CD4-positive, alpha-beta T cell (primary cell): ENCODE measurements at regions of chrX and their contacts with region 1.

Region 1: GRCh38 chrX:140141444-140142029 is 176.2 kb upstream of the CXorf66 start:
- DNase-seq: peak in 7 of 14 experiments; percentile 1 to 44 (median 15)
- ATAC-seq: no peak
- H3K4me3 ChIP-seq: no peak overlapping the region
- H3K4me3 Mint-ChIP-seq: no peak overlapping the region
- H3K27ac ChIP-seq: no peak overlapping the region
- H3K27ac Mint-ChIP-seq: no peak overlapping the region
- H3K4me1 ChIP-seq: no peaks in the 10 kb centered on the region
- H3K4me1 Mint-ChIP-seq: no peaks in the 10 kb centered on the region
- H3K27me3 ChIP-seq: no peaks in the 10 kb centered on the region
- H3K27me3 Mint-ChIP-seq: no peaks in the 10 kb centered on the region
- CTCF ChIP-seq: peak; percentile 43

Region 2: DNA sequence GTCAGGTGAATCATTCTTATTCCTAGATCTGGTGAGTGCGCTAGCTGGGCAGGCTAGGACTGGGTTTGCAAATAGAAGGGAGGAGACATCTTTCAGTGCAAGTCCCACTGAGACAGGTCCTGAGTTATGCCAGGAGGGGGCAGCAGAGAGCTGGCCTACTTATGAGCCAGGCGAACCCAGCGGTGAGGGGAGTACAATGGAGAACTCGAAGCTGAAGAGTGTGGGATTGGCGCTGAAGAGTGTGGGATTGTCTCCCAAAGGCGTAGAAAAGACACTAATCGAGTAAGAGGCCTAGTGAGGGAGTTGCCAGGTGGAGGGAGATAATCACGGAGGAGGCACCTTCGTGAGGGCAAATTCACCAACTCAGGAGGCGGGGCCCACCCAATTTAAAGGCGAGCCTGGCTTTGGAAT is 84.5 kb before region 1 on chrX:
- CTCF ChIA-PET with region 1: no interaction called
- POLR2A ChIA-PET with region 1: no interaction called
- intact Hi-C with region 1: loop called in 1 of 2 experiments (anchors 5 kb)
- DNase-seq: peak; percentile 7 to 67 (median 38)
- ATAC-seq: no peak
- H3K4me3 ChIP-seq: no peak overlapping the region
- H3K4me3 Mint-ChIP-seq: no peak overlapping the region
- H3K27ac ChIP-seq: no peak overlapping the region
- H3K27ac Mint-ChIP-seq: no peak overlapping the region
- H3K4me1 ChIP-seq: peaks cover 3% of the 10 kb centered on the region
- H3K4me1 Mint-ChIP-seq: peaks cover 5% of the 10 kb centered on the region
- H3K27me3 ChIP-seq: no peaks in the 10 kb centered on the region
- H3K27me3 Mint-ChIP-seq: no peaks in the 10 kb centered on the region
- CTCF ChIP-seq: peak; percentile 57

Region 3: DNA sequence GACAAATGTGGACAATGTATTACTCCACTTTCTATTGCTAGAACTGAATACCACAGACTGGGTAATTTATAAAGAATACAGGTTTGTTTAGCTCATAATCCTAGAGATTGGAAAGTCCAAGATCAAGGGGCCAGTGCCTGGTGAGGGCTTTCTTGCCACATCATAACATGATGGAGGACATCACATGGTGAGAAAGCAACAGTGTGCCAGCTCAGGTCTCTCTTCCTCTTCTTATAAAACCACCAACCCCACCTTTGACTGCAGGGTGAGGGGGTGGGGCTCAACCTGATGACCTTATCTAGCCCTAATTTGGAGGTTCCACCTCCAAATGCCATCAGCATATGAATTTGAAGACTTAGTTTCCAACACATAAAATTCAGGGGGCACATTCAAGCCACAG is 70.5 kb before region 1 on chrX:
- CTCF ChIA-PET with region 1: no interaction called
- POLR2A ChIA-PET with region 1: no interaction called
- intact Hi-C with region 1: loop called in 1 of 2 experiments (anchors 5 kb)
- DNase-seq: no peak
- ATAC-seq: no peak
- H3K4me3 ChIP-seq: no peak overlapping the region
- H3K4me3 Mint-ChIP-seq: no peak overlapping the region
- H3K27ac ChIP-seq: no peak overlapping the region
- H3K27ac Mint-ChIP-seq: no peak overlapping the region
- H3K4me1 ChIP-seq: no peaks in the 10 kb centered on the region
- H3K4me1 Mint-ChIP-seq: no peaks in the 10 kb centered on the region
- H3K27me3 ChIP-seq: no peaks in the 10 kb centered on the region
- H3K27me3 Mint-ChIP-seq: no peaks in the 10 kb centered on the region
- CTCF ChIP-seq: no peak